ENCODE measurements at regions of chr3 and their contacts with region 1.

Region 1: GRCh38 chr3:48301020-48301796 is 32.3 kb downstream of the SPINK8 start:
- DNase-seq: peak; percentile 63 to 93
- H3K4me3 ChIP-seq: peak within 1 kb of the TSS; percentile 91 to 96
- H3K27ac ChIP-seq: peak within 1 kb of the TSS; percentile 97
- H3K4me1 ChIP-seq: peaks cover 0 to 8% of the 10 kb centered on the region in 2 donors
- H3K27me3 ChIP-seq: no peaks in the 10 kb centered on the region
- CTCF ChIP-seq: no peak

Region 2: DNA sequence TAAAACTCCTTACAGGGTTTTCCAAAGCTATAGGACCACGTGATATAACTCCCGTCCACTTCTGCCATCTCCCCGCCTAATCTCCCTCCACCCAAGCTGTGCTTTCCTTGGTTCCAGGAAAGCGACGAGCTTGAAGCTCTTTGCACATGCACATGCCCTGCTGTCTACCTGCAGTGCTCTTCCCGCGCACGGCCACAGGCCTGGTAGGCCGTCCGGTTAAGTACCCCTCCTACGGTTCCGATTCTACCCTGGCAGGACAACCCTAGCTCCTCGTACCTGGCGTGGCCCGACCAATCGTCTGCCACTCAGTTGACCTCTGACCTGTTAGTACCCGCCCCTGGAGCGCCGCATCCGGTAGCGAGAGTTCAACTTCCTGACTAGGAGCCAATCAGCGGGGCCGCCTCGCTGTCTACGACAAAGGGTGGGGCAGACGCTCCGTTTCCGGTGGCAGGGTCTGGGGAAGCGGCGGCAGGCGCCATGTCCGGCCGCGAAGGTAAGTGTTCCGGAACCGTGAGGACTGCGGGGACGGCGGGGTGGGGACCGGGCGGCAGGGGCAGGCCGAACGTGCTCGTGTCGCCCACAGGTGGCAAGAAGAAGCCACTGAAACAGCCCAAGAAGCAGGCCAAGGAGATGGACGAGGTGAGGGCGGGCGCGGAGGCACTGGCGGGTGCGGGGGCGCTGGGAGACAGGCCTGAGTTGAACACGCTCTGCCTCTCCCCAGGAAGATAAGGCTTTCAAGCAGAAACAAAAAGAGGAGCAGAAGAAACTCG is 138.8 kb after region 1 on chr3 and contains the starts of genes CCDC51 and TMA7:
- intact Hi-C with region 1: loop called (anchors 5 kb)
- DNase-seq: peak; percentile 94 to 99
- H3K4me3 ChIP-seq: peak within 1 kb of the TSS; percentile 81 to 89
- H3K27ac ChIP-seq: peak within 1 kb of the TSS; percentile 95
- H3K4me1 ChIP-seq: peaks cover 6 to 18% of the 10 kb centered on the region in 2 donors
- H3K27me3 ChIP-seq: no peaks in the 10 kb centered on the region
- CTCF ChIP-seq: no peak
- total RNA-seq, gene CCDC51: 19.3 TPM
- total RNA-seq, gene TMA7: 142 TPM

Measured in ascending aorta (tissue), 2 donors.